SK-MEL-5 (cell line): ENCODE measurements at regions of chr6 and their contacts with region 1.

Region 1: GRCh38 chr6:41182069-41183034 is 18.6 kb downstream of the TREML2 start:
- DNase-seq: peak; percentile 86

Region 2: GRCh38 chr6:41092421-41093140 is 89.8 kb before region 1 on chr6:
- in situ Hi-C with region 1: loop called (anchors 25 kb)
- DNase-seq: peak; percentile 67